Esophagus muscularis mucosa (tissue), 4 donors: ENCODE measurements at regions of chr11 and their contacts with region 1.

Region 1: GRCh38 chr11:94183886-94184264 is 55.2 kb downstream of the PANX1 start:
- DNase-seq: peak; percentile 77
- H3K4me3 ChIP-seq: no peak overlapping the region
- H3K27ac ChIP-seq: no peak overlapping the region
- H3K4me1 ChIP-seq: peaks cover 0 to 12% (median 11%) of the 10 kb centered on the region in 4 donors
- H3K27me3 ChIP-seq: no peaks in the 10 kb centered on the region
- CTCF ChIP-seq: peak; percentile 53 to 72 (median 68)
- EP300 ChIP-seq: no peak
- POLR2A ChIP-seq: no peak

Region 2: DNA sequence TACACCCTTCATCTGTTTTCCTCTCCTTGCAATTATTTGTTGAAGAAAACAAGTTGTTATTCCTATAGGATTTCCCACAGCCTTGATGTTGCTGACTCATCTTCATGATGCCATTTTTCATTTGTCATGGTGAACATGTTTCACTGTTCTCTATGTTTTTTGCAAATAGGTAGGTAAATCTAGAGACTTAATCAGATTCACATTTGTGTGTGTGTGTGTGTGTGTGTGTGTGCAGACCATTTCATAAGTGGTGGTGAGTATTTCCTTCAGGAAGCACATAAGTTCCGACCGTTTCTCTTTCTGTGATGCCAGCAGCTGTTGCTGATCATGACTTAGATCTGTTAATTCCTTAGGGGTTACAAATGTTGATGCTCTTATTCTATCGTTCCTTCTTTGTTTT is 40.2 kb after region 1 on chr11:
- intact Hi-C with region 1: no loop called
- DNase-seq: no peak
- H3K4me3 ChIP-seq: no peak overlapping the region
- H3K27ac ChIP-seq: no peak overlapping the region
- H3K4me1 ChIP-seq: no peaks in the 10 kb centered on the region
- H3K27me3 ChIP-seq: no peaks in the 10 kb centered on the region
- CTCF ChIP-seq: no peak
- EP300 ChIP-seq: no peak
- POLR2A ChIP-seq: no peak

Region 3: GRCh38 chr11:94417386-94417987 is 233.6 kb after region 1 on chr11:
- intact Hi-C with region 1: loop called (anchors 10 kb)
- DNase-seq: no peak
- H3K4me3 ChIP-seq: no peak overlapping the region
- H3K27ac ChIP-seq: no peak overlapping the region
- H3K4me1 ChIP-seq: no peaks in the 10 kb centered on the region
- H3K27me3 ChIP-seq: no peaks in the 10 kb centered on the region
- CTCF ChIP-seq: peak; percentile 40 to 54 (median 44)
- EP300 ChIP-seq: no peak
- POLR2A ChIP-seq: no peak